ENCODE measurements at regions of chr3 and their contacts with region 1.

Region 1: DNA sequence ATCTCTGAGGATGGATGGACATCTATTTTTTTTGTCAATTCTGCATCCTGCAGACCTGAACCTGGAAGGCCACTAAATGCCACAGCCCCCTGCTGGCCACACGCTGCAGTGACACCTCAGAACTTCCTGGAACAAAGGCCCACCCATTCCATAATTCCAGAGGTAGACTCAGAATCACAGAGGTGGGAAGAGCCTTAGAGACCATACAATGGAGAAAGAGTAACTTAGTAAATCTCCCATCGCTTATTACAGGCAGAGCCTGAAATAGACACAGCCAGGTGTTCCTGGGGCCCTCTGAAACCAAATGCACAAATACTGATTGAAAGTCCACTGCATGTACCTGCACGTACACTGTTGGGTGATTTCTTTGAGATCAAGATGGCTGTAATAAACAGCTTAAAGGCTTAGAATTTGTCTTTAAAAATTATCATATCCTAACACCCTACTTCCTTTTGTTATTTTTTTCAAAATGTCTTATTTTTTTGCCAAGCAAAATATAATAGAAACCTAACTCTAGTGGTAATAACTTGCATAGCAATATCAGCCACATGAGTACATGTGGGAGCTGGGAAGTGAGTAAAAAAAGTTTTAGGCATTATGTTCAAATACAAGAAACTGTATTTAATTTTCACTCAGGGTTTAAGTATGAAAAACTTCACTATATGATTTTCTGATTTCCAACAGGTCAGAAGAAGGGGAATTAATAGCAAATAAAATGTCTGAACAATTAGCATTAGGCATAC is 62.7 kb downstream of the EOMES start:
- DNase-seq: peak; percentile 63 to 72
- H3K4me3 ChIP-seq: no peak overlapping the region
- H3K27ac ChIP-seq: no peak overlapping the region
- H3K4me1 ChIP-seq: no peaks in the 10 kb centered on the region
- H3K27me3 ChIP-seq: no peaks in the 10 kb centered on the region
- CTCF ChIP-seq: peak; percentile 42 to 83 (median 76)
- POLR2A ChIP-seq: no peak

Region 2: DNA sequence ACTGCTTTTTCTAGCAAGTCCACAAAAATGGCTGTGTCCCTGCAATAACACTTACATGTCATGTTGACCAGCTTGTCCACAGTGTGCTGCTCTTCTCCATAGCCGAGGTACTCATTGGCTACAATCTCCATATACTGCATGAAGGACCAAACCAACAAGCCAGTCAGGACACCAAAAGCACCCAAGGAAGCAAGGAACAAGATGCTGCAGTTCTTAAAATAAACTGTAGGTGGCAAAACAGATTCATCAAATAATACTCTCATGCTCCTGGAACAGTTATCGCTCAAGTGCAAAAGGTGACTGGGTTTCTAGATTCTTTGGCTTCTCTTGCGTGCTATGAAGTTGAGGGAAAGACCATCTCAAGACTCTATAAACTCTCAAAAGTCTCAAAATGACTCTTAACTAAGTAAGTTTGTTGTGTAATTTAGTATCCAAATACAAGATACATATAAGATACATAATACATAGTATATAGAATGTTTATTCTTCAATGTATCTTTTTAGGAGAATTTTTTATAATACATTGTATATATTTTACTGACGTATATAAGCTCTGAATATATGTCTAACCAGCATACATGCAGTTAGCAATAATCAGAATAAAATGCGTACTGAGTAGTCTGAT is 347.3 kb before region 1 on chr3:
- intact Hi-C with region 1: loop called (anchors 10 kb)
- DNase-seq: no peak
- H3K4me3 ChIP-seq: no peak overlapping the region
- H3K27ac ChIP-seq: no peak overlapping the region
- H3K4me1 ChIP-seq: no peaks in the 10 kb centered on the region
- H3K27me3 ChIP-seq: no peaks in the 10 kb centered on the region
- CTCF ChIP-seq: peak; percentile 44 to 79 (median 66)
- POLR2A ChIP-seq: no peak

Region 3: DNA sequence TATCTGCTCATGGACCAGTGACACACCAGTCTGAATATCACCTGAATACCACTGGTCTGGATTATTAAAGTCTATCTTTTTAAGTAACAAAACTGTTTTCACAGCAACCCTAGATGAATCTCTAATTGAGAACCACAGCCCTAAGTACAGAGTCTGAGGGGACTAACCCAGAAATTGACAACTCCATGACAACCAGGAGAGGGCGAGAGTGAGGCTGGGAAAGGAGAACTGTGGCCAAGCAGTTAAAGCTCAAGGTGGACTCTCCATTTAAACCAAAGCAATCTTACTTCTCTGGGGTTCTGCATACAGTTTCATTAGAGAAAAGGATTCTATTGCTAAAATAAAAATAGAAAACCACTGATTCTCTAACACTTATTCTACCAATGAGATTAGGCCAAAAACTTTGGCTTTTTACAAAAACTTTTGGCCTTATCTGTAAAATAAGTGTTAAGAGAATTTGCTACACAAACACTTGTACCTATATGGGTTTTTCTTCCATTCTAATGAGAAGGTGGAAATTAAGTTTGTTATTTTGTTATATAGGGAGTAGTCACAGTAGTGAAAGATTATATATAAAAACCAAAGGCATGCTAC is 301.7 kb before region 1 on chr3:
- intact Hi-C with region 1: loop called (anchors 10 kb)
- DNase-seq: peak; percentile 50 to 57
- H3K4me3 ChIP-seq: no peak overlapping the region
- H3K27ac ChIP-seq: no peak overlapping the region
- H3K4me1 ChIP-seq: peaks cover 0 to 8% of the 10 kb centered on the region in 2 donors
- H3K27me3 ChIP-seq: no peaks in the 10 kb centered on the region
- CTCF ChIP-seq: peak in 4 of 6 experiments; percentile 43 to 70 (median 58)
- POLR2A ChIP-seq: no peak

Region 4: GRCh38 chr3:27596334-27596841 is 63.1 kb before region 1 on chr3:
- intact Hi-C with region 1: no loop called
- DNase-seq: peak; percentile 17 to 36
- H3K4me3 ChIP-seq: no peak overlapping the region
- H3K27ac ChIP-seq: no peak overlapping the region
- H3K4me1 ChIP-seq: peaks cover 9 to 16% of the 10 kb centered on the region in 2 donors
- H3K27me3 ChIP-seq: no peaks in the 10 kb centered on the region
- CTCF ChIP-seq: no peak
- POLR2A ChIP-seq: no peak

Region 5: GRCh38 chr3:27610800-27611525 is 48.5 kb before region 1 on chr3:
- intact Hi-C with region 1: no loop called
- DNase-seq: no peak
- H3K4me3 ChIP-seq: no peak overlapping the region
- H3K27ac ChIP-seq: no peak overlapping the region
- H3K4me1 ChIP-seq: no peaks in the 10 kb centered on the region
- H3K27me3 ChIP-seq: no peaks in the 10 kb centered on the region
- CTCF ChIP-seq: no peak
- POLR2A ChIP-seq: no peak

Measured in thyroid gland (tissue), 4 donors.